Astrocyte of the cerebellum (primary cell): ENCODE measurements at regions of chr12 and their contacts with region 1.

Region 1: GRCh38 chr12:127526925-127527324 is 740.0 kb upstream of the TMEM132C start:
- DNase-seq: no peak
- H3K4me3 ChIP-seq: no peak overlapping the region
- CTCF ChIP-seq: no peak

Region 2: DNA sequence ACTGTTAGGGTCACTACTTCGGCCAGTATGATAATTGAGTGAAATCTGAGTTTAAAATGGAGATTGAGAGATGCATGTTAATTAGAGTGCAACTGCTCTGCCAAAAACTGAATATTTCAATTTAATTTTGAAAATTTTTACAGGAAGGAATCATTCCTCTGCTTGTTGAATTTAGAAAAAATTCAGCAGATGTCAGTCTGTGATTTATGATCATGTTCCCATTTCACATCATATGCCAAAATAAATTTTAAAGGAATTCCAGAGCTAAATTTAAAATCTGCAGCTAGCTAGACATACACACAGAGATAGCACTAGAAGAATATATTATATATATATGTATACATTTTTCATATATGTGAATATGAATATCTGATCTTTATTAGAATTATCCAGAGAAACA is 57.6 kb before region 1 on chr12:
- in situ Hi-C with region 1: no loop called
- DNase-seq: no peak
- H3K4me3 ChIP-seq: no peak overlapping the region
- CTCF ChIP-seq: no peak

Region 3: GRCh38 chr12:127570793-127571360 is 44.0 kb after region 1 on chr12:
- in situ Hi-C with region 1: no loop called
- DNase-seq: no peak
- H3K4me3 ChIP-seq: no peak overlapping the region
- CTCF ChIP-seq: no peak

Region 4: DNA sequence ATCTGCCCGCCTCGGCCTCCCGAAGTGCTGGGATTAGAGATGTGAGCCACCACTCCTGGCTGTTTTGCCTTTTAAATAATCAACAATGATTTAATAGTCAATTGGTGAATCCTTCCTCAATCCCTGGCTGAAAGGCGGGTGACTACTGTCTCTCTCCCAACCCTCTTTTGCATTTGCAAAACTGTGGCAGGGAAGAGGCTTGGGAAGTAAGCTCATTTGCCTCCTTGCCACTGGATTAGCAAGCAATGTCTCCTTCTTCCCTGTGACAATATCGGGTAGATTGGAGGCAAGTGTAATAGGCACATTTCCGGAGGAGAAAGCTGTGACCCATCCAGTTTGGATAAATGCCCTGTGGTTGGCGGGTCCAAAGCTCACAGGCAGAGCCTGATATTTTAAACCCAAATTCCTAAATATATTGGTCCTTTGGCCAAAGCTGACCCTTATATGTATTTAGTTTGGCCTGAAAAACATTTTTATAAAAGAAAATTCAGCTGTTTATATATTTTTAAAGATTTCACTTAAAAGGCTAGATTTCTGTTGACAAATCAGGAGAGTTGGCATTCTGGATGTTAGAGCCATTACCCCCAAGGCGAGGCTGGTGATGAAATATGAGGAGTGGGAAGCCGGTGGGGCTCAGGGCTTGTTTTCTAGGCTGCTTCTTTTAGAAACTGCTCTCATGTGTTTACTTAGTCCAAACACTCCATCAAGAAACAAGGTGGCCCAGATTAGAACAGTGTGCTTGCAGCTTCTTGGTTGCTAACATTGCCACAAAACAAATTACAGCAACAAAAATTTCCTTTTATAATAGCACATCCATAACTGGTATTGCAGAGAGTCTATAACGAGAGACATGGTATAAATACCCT is 93.2 kb after region 1 on chr12:
- in situ Hi-C with region 1: no loop called
- DNase-seq: no peak
- H3K4me3 ChIP-seq: no peak overlapping the region
- CTCF ChIP-seq: no peak

Region 5: GRCh38 chr12:127664901-127665300 is 138.0 kb after region 1 on chr12:
- in situ Hi-C with region 1: loop called (anchors 5 kb)
- DNase-seq: no peak
- H3K4me3 ChIP-seq: no peak overlapping the region
- CTCF ChIP-seq: no peak